ENCODE measurements at regions of chr14 and their contacts with region 1.

Region 1: DNA sequence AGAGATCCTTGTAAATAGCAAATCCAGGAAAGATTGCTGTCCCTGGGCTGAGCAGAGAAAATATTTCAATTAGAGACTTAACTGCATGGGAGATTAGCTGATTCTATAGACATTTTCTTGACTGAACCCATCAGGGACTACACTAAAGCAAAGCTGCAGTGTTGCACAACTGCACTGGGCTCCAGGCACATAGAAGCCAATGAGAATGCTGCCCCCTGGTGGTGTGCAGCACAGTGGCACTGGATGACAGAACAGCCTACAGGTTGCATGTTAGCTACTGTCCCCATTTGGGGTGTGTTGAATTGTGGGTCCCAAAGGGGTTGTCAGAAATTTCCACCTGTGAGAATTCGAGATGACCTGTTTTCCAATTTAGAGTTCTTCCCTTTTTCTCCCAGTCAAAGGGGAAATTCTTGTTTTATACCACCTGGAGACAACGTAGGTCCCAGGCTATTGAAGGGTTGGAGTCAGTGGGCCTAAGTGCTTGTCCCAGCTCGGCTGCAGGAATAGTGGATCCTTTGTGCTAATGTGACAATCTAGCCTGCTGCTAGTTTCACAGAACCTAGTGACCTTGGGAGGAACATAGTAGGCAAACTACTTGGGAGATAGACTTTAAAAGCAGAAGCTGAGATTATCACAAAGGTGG is 114.7 kb downstream of the SLC8A3 start:
- DNase-seq: peak; percentile 80
- ATAC-seq: peak; percentile 94
- H3K4me3 Mint-ChIP-seq: no peak overlapping the region
- H3K27ac Mint-ChIP-seq: no peak overlapping the region
- H3K4me1 Mint-ChIP-seq: peaks cover 18% of the 10 kb centered on the region
- H3K27me3 Mint-ChIP-seq: no peaks in the 10 kb centered on the region
- CTCF ChIP-seq: peak; percentile 93

Region 2: GRCh38 chr14:69818757-69819191 is 255.3 kb before region 1 on chr14:
- CTCF ChIA-PET with region 1: interaction called, 12 read pairs
- POLR2A ChIA-PET with region 1: no interaction called
- DNase-seq: peak; percentile 60
- ATAC-seq: peak; percentile 87
- H3K4me3 Mint-ChIP-seq: no peak overlapping the region
- H3K27ac Mint-ChIP-seq: no peak overlapping the region
- H3K4me1 Mint-ChIP-seq: peaks cover 2% of the 10 kb centered on the region; the same call in 1 of the 2 replicates
- H3K27me3 Mint-ChIP-seq: no peaks in the 10 kb centered on the region
- CTCF ChIP-seq: peak; percentile 89

Region 3: GRCh38 chr14:69990323-69990722 is 83.7 kb before region 1 on chr14:
- CTCF ChIA-PET with region 1: no interaction called
- POLR2A ChIA-PET with region 1: no interaction called
- DNase-seq: no peak
- ATAC-seq: no peak
- H3K4me3 Mint-ChIP-seq: no peak overlapping the region
- H3K27ac Mint-ChIP-seq: no peak overlapping the region
- H3K4me1 Mint-ChIP-seq: peaks cover 29% of the 10 kb centered on the region
- H3K27me3 Mint-ChIP-seq: no peaks in the 10 kb centered on the region
- CTCF ChIP-seq: no peak

Region 4: DNA sequence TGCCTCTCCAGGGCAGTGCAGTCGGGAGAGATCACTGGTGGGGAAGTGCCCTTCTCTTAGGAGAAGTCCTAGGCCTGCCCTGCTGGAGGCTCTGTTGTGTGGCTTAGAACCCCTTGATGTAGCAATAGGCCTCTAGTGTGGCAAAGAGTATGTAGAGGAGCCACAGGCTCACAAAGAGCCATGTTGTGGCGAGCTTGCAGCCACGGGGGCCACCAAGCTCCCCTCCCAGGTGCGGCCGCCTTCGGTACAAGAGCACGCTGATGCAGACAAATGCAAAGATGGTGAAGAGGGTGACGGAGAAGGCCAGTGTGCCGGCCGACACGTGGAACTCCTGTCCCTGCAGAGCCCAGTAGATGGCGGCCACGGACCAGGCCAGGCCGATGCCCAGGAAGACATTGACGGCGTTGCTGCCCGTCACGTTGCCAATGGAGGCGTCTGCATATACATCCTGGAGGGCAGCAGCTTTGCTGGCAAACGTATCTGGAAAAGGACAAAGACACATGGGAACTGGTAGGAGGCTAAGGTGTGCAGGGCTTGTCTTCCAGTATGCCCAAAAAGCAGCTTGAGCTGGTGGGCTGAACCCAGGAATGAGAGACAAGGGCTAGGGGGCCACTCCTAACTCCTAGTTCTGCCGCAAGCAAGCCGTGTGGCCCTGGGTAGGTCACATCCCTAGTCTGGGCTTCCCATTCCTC is 28.1 kb before region 1 on chr14:
- CTCF ChIA-PET with region 1: interaction called, 49 read pairs
- POLR2A ChIA-PET with region 1: no interaction called
- DNase-seq: peak; percentile 81
- ATAC-seq: peak; percentile 98
- H3K4me3 Mint-ChIP-seq: no peak overlapping the region
- H3K27ac Mint-ChIP-seq: no peak overlapping the region
- H3K4me1 Mint-ChIP-seq: no peaks in the 10 kb centered on the region
- H3K27me3 Mint-ChIP-seq: peaks cover 8% of the 10 kb centered on the region
- CTCF ChIP-seq: peak; percentile 61; the same call in 1 of the 2 replicates

Region 5: DNA sequence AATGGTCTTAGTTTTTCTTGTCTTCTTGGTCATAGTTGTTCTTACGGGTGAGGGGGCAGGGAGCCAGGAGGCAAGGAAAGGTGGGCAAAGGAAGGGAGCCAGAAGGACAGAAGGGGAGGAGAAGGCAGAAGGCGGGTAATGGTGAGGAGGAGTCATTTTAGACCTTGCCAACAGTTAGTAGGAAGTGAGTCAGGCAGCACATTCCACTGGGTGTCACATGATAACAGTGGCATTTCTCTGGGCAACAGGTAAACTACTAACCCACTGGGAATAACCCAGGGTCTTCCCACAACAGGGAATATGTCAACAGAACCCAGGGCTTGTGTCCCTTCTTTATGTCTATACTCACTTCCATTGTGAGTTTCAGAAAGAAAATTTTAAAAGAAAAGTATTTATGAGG is 12.9 kb before region 1 on chr14:
- CTCF ChIA-PET with region 1: interaction called, 23 read pairs
- POLR2A ChIA-PET with region 1: no interaction called
- DNase-seq: no peak
- ATAC-seq: no peak; the same call in 1 of the 2 replicates
- H3K4me3 Mint-ChIP-seq: no peak overlapping the region
- H3K27ac Mint-ChIP-seq: no peak overlapping the region
- H3K4me1 Mint-ChIP-seq: peaks cover 11% of the 10 kb centered on the region; the same call in 1 of the 2 replicates
- H3K27me3 Mint-ChIP-seq: no peaks in the 10 kb centered on the region
- CTCF ChIP-seq: no peak

Region 6: DNA sequence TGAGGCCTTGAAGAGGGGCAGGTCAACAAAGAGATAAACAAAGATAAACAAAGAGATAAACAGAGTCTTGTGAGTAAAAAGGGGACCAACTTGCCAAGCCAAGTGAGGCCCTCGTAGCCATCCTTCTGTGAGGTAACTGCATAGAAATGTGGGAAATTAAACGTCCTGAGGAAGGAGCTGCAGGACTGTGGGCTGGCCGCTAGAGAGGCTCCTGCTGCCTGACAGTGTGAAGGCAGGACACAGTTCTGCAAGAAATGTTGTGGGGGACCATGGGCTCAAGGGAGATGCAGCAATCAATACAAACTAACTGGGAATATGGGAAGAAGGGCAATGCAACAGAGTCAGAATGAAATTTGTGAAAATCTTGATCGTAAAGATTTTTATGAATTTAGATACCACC is 22.8 kb after region 1 on chr14:
- CTCF ChIA-PET with region 1: interaction called, 20 read pairs
- POLR2A ChIA-PET with region 1: no interaction called
- DNase-seq: peak; percentile 56
- ATAC-seq: peak; percentile 95
- H3K4me3 Mint-ChIP-seq: no peak overlapping the region
- H3K27ac Mint-ChIP-seq: no peak overlapping the region
- H3K4me1 Mint-ChIP-seq: peaks cover 31% of the 10 kb centered on the region
- H3K27me3 Mint-ChIP-seq: no peaks in the 10 kb centered on the region
- CTCF ChIP-seq: no peak